CD4-positive, alpha-beta T cell (primary cell): ENCODE measurements at regions of chr15 and their contacts with region 1.

Region 1: GRCh38 chr15:29747837-29748417 is 74.3 kb downstream of the TJP1 start:
- DNase-seq: peak in 3 of 14 experiments; percentile 9 to 13 (median 9)
- ATAC-seq: no peak
- H3K4me3 ChIP-seq: no peak overlapping the region
- H3K4me3 Mint-ChIP-seq: no peak overlapping the region
- H3K27ac ChIP-seq: no peak overlapping the region
- H3K27ac Mint-ChIP-seq: no peak overlapping the region
- H3K4me1 ChIP-seq: no peaks in the 10 kb centered on the region
- H3K4me1 Mint-ChIP-seq: no peaks in the 10 kb centered on the region
- H3K27me3 ChIP-seq: peaks cover 2 to 26% of the 10 kb centered on the region in 2 experiments
- H3K27me3 Mint-ChIP-seq: peaks cover 65% of the 10 kb centered on the region
- CTCF ChIP-seq: peak; percentile 72

Region 2: GRCh38 chr15:29925227-29926082 is 177.5 kb after region 1 on chr15:
- CTCF ChIA-PET with region 1: no interaction called
- POLR2A ChIA-PET with region 1: no interaction called
- intact Hi-C with region 1: loop called (anchors 5 kb)
- DNase-seq: peak in 7 of 14 experiments; percentile 1 to 28 (median 12)
- ATAC-seq: no peak
- H3K4me3 ChIP-seq: no peak overlapping the region
- H3K4me3 Mint-ChIP-seq: no peak overlapping the region
- H3K27ac ChIP-seq: no peak overlapping the region
- H3K27ac Mint-ChIP-seq: no peak overlapping the region
- H3K4me1 ChIP-seq: no peaks in the 10 kb centered on the region
- H3K4me1 Mint-ChIP-seq: no peaks in the 10 kb centered on the region
- H3K27me3 ChIP-seq: peaks cover 9 to 15% of the 10 kb centered on the region in 2 experiments
- H3K27me3 Mint-ChIP-seq: peaks cover 62% of the 10 kb centered on the region
- CTCF ChIP-seq: peak; percentile 28

Region 3: DNA sequence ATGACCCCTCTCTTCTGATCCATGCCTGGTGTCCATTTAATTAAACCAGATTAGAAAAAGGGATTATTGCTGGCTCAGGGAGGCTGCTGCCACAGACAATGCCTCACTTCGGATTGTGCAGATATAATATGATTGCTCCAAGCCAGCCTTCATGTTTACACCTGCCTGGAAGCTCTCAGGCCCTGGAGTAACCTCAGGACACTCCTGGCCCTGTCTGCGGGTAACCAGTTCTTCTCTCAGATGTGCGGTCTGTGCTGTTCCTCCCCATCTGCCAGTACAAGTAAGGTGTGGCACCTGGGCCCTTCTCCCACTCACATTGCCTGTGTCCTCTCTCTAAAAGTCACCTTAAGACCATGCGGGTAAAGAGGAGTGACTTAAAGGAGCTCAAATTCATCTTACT is 326.0 kb after region 1 on chr15:
- CTCF ChIA-PET with region 1: no interaction called
- POLR2A ChIA-PET with region 1: interaction called, 3 read pairs
- intact Hi-C with region 1: loop called in 1 of 2 experiments (anchors 5 kb)
- DNase-seq: no peak
- ATAC-seq: no peak
- H3K4me3 ChIP-seq: no peak overlapping the region
- H3K4me3 Mint-ChIP-seq: no peak overlapping the region
- H3K27ac ChIP-seq: no peak overlapping the region
- H3K27ac Mint-ChIP-seq: no peak overlapping the region
- H3K4me1 ChIP-seq: no peaks in the 10 kb centered on the region
- H3K4me1 Mint-ChIP-seq: no peaks in the 10 kb centered on the region
- H3K27me3 ChIP-seq: peaks cover 0 to 7% of the 10 kb centered on the region in 2 experiments
- H3K27me3 Mint-ChIP-seq: peaks cover 42% of the 10 kb centered on the region
- CTCF ChIP-seq: no peak